ENCODE measurements at regions of chr15 and their contacts with region 1.

Region 1: GRCh38 chr15:92989470-92989869 is 89.3 kb downstream of the CHD2 start:
- DNase-seq: peak; percentile 38
- ATAC-seq: peak; percentile 47
- H3K4me3 ChIP-seq: no peak overlapping the region
- H3K27ac ChIP-seq: no peak overlapping the region
- H3K4me1 ChIP-seq: no peaks in the 10 kb centered on the region
- H3K27me3 ChIP-seq: no peaks in the 10 kb centered on the region
- CTCF ChIP-seq: no peak
- EP300 ChIP-seq: no peak
- POLR2A ChIP-seq: no peak
- RAD21 ChIP-seq: no peak

Region 2: DNA sequence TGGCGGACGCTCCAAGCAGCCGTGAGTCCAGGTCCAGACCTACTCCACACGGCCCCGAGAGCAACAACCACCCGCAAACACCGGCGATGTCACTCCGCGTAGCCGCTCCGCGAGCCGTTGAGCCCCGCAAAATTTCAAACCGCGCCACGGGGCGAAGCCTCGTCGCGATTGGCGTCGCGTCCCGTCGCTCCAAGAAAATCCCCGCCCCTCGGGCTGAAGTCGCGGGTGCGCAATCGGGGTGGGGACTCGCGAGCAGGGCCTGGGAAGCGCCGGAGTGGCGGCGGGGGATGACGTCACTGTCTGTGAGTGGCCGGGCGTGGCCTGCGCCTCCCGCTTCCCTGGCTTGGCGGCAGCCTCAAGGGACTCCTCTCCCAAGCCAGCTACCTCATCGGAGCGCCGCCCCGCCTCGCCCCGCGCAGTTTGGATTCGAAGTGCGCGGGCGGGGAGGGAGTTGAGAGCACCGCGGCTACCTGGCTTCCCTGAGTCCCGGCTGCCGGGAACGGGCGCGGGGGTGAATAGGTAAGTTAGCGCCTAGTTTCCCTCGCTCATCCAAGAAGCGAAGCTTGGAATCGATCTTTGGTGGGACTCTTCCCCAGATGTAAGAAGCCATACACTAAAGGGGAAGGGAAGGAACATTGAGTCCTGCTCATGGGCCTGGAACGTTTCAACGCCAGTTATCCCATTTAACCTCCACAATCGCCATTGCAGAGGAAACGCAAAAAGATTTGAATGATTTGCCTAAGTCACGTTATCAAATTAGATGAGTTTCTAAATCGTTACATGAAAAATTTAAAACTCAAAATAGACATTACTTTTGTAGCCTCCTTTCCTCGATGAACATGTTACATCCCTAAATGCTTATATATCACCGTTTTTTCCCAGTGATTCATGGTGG is 1994.8 kb before region 1 on chr15 and contains the start of gene PRC1:
- CTCF ChIA-PET with region 1: no interaction called
- POLR2A ChIA-PET with region 1: no interaction called
- RAD21 ChIA-PET with region 1: no interaction called
- SMC1A ChIA-PET with region 1: no interaction called
- in situ Hi-C with region 1: loop called (anchors 25 kb)
- intact Hi-C with region 1: no loop called
- DNase-seq: peak; percentile 77
- ATAC-seq: peak; percentile 94
- H3K4me3 ChIP-seq: peak within 1 kb of the TSS; percentile 99
- H3K27ac ChIP-seq: peak within 1 kb of the TSS; percentile 96
- H3K4me1 ChIP-seq: peaks cover 3% of the 10 kb centered on the region; the same call in 1 of the 2 replicates
- H3K27me3 ChIP-seq: no peaks in the 10 kb centered on the region
- CTCF ChIP-seq: no peak
- EP300 ChIP-seq: no peak
- POLR2A ChIP-seq: peak; percentile 95
- RAD21 ChIP-seq: no peak
- polyA plus RNA-seq, gene PRC1: 100 to 130 TPM

Region 3: DNA sequence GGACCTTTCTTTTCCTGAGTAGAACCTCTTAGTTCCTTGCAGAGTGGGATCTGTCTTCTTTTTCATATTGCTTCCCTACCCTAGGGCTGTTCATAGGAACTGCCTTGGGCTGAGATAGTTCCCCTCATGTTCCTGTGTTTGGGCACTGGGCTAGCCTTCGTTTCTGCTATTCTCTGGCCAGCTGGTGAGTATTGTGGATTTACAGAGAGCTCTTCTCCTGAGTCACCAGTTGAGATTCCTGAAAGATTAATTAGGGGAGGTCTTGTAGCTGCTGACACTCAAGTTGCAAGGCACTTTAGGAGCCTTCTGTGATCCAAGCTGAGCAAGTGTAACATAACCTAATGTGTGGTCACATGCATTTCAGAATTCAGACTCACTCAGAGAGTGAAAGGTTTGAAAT is 58.7 kb before region 1 on chr15:
- CTCF ChIA-PET with region 1: interaction called, 3 read pairs
- POLR2A ChIA-PET with region 1: no interaction called
- RAD21 ChIA-PET with region 1: no interaction called
- SMC1A ChIA-PET with region 1: interaction called, 3 read pairs
- in situ Hi-C with region 1: loop called (anchors 5 kb)
- intact Hi-C with region 1: no loop called
- DNase-seq: no peak
- ATAC-seq: no peak; the same call in 2 of the 3 replicates
- H3K4me3 ChIP-seq: no peak overlapping the region
- H3K27ac ChIP-seq: no peak overlapping the region
- H3K4me1 ChIP-seq: peaks cover 8% of the 10 kb centered on the region; the same call in 1 of the 2 replicates
- H3K27me3 ChIP-seq: no peaks in the 10 kb centered on the region
- CTCF ChIP-seq: no peak
- EP300 ChIP-seq: no peak
- POLR2A ChIP-seq: no peak
- RAD21 ChIP-seq: no peak

Measured in GM12878 (cell line).